GM10248 (cell line): ENCODE measurements at regions of chr7 and their contacts with region 1.

Region 1: DNA sequence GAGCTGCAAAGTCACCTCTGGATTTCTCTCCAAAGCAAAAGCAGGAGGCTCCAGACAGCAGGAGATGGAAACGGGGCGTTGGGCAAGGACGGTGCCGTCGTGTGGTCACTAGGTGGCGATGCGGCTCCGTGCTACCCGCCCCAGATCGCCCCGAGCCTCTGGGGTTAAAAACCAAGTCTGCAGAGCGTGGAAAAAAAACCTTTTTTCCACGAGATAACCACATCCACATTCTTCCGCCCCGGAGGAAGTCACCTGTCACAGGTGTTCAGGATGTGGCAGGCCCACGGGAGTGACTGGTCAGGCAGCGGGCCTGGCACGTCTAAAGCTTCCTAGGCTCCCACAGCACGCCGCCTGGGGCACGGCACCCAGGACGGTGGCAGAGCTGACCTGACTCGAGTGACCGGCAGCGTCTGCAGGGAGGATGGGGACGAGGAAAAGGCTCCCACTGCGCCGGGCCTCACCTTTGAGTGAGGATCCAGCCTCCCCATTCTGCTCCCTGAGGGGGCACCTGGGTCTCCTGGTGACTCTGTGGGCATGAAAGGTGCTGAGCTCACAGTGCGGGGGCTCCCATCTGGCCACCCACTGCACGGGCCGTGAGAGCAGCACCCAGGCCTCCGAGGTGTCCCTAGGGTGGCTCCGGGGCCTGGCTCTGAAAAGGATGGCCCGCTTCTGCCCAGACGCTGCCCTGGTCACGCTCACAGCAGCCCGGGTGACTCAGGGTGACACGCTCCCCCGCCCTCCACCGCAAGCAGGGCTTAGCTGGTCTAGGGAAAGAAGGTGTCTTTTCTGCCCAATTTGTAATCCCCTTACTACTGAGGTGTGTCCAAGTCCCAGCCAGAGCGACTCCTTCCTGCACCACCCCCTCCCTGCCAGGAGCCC is 71.3 kb upstream of the TNRC18 start:
- DNase-seq: peak; percentile 87
- CTCF ChIP-seq: peak; percentile 95

Region 2: GRCh38 chr7:5466551-5466950 is 28.4 kb before region 1 on chr7:
- CTCF ChIA-PET with region 1: no interaction called
- POLR2A ChIA-PET with region 1: interaction called, 11 read pairs
- DNase-seq: no peak
- CTCF ChIP-seq: no peak

Region 3: DNA sequence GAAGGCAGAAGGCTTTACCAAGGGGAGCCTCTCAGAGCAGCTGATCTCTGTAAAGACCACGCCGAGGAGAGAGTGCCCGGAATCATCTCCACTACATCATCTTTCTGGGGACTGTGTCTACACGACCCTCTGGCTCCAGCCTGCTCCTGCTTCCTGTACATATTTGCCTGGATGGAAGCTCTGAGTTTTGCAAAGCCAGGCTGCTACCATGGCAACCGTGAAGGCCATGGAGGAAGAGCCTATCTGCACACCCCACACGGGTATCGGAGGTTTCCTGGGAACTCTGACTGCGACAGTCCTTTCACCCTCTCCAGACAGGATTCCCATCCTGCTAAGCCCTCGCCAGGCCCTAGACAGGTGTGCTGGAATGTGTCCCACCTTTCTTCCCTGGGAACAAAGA is 12.1 kb after region 1 on chr7:
- CTCF ChIA-PET with region 1: interaction called, 27 read pairs
- POLR2A ChIA-PET with region 1: no interaction called
- DNase-seq: no peak
- CTCF ChIP-seq: no peak

Region 4: DNA sequence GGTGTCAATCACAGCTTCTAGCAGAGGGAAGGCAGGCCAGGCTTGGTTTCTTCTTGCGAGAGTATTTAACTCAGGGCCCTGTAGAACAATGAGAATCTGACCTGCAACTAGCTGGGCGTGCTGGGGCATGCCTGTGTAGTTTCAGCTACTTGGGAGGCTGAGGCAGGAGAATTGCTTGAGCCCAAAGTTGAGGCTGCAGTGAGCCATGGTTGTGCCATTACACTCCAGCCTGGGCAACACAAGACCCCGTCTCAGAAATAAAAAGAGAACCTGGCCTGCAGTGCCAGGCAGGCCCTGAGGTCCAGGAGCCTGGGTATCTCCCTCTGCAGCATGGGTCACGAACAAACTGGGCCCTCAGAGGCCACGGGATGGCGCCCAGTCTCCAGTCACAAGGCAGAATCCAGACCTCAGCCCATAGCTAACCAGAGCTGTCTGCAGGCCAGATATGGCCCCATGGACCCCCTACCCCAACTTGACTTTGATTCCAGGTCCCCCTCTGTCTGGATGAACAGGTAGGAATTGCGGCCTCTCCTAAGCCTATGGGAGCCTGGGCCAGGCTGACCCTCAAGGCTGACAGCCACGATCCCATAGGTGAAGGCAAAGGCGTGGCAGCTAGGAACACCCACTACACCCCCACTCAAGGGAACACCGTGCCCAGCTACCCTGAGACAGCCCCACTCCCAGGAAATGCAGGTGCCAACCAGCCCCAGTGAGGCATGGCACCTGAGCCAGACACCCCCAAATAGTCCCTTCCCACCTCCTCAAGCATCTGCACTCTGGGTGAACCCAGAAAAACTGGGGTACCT is 31.4 kb after region 1 on chr7:
- CTCF ChIA-PET with region 1: interaction called, 14 read pairs
- POLR2A ChIA-PET with region 1: interaction called, 4 read pairs
- DNase-seq: no peak
- CTCF ChIP-seq: peak; percentile 34

Region 5: GRCh38 chr7:5677538-5678294 is 182.8 kb after region 1 on chr7:
- CTCF ChIA-PET with region 1: interaction called, 72 read pairs
- POLR2A ChIA-PET with region 1: no interaction called
- DNase-seq: peak; percentile 48
- CTCF ChIP-seq: peak; percentile 70

Region 6: GRCh38 chr7:5704534-5704922 is 209.6 kb after region 1 on chr7:
- CTCF ChIA-PET with region 1: interaction called, 38 read pairs
- POLR2A ChIA-PET with region 1: interaction called, 3 read pairs
- DNase-seq: peak; percentile 67
- CTCF ChIP-seq: peak; percentile 88